ENCODE measurements at regions of chr4 and their contacts with region 1.

Region 1: DNA sequence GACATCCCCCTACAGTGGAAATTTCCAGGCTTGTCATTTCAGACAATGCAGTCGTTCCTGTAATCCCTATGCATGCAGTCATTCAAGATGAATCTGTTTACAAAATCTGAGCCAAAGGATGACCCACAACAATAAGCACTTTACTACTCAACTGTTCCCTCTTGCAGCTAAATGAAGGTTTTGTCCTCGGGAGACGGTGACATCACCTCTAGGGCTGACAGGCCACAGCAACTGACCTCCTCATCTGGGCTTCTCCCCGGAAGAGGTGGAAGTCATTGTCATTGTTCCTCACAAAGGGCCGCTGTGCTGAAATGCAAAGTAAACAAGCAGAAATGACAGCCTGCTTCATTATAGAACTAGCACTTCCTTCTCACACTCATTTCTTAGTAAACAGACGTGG is 29.2 kb downstream of the CLRN2 start:
- DNase-seq: no peak
- ATAC-seq: no peak
- H3K4me3 Mint-ChIP-seq: no peak overlapping the region
- H3K27ac Mint-ChIP-seq: no peak overlapping the region
- H3K4me1 Mint-ChIP-seq: peaks cover 6% of the 10 kb centered on the region
- H3K27me3 Mint-ChIP-seq: peaks cover 23% of the 10 kb centered on the region

Region 2: GRCh38 chr4:17168571-17168970 is 375.6 kb before region 1 on chr4:
- CTCF ChIA-PET with region 1: no interaction called
- POLR2A ChIA-PET with region 1: no interaction called
- DNase-seq: no peak
- ATAC-seq: no peak
- H3K4me3 Mint-ChIP-seq: no peak overlapping the region
- H3K27ac Mint-ChIP-seq: no peak overlapping the region
- H3K4me1 Mint-ChIP-seq: no peaks in the 10 kb centered on the region
- H3K27me3 Mint-ChIP-seq: peaks cover 8% of the 10 kb centered on the region

Region 3: GRCh38 chr4:17414392-17414791 is 129.8 kb before region 1 on chr4:
- CTCF ChIA-PET with region 1: no interaction called
- POLR2A ChIA-PET with region 1: no interaction called
- DNase-seq: no peak
- ATAC-seq: no peak
- H3K4me3 Mint-ChIP-seq: no peak overlapping the region
- H3K27ac Mint-ChIP-seq: no peak overlapping the region
- H3K4me1 Mint-ChIP-seq: no peaks in the 10 kb centered on the region
- H3K27me3 Mint-ChIP-seq: peaks cover 6% of the 10 kb centered on the region

Region 4: DNA sequence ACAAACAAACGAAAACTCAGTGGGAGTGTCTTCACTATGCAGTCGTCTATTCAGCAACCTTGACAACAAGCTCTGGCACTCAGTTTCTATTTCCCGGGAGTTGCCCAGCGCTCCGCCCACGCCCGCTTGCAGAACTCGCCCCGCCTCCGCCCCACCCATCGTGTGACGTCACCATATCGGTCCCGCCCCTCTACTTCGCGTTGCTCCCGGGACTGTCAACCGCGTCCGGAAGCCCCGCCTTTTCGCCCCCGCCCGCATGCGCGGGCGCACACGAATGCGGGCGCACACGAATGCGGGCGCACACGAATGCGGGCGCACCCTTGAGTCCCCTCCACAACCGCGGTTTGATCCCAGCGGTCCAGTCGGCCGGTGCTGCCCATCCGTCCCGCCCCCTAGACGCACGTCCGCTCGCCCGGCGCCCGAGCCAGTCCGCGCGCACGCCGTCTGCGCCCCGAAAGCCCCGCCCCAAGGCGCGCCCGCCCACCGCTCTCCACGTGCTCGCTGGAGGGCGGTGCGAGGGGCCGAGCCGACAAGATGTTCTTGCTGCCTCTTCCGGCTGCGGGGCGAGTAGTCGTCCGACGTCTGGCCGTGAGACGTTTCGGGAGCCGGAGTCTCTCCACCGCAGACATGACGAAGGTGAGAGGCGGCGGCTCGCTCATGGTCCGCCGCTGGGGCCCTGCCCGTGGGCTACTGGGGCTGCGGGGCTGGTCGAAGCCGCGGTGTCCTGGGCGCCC is 32.9 kb after region 1 on chr4 and contains the start of gene LAP3:
- CTCF ChIA-PET with region 1: interaction called, 22 read pairs
- POLR2A ChIA-PET with region 1: interaction called, 9 read pairs
- DNase-seq: peak; percentile 99
- ATAC-seq: peak; percentile 88
- H3K4me3 Mint-ChIP-seq: peak within 1 kb of the TSS; percentile 95
- H3K27ac Mint-ChIP-seq: peak within 1 kb of the TSS; percentile 99
- H3K4me1 Mint-ChIP-seq: peaks cover 43% of the 10 kb centered on the region
- H3K27me3 Mint-ChIP-seq: no peaks in the 10 kb centered on the region
- total RNA-seq, gene LAP3: 147 to 154 TPM